ENCODE measurements at regions of chr10 and their contacts with region 1.

Region 1: GRCh38 chr10:92880233-92880861 is 32.0 kb downstream of the EXOC6 start:
- DNase-seq: peak; percentile 60
- ATAC-seq: peak; percentile 33; the same call in 1 of the 2 replicates
- H3K4me3 ChIP-seq: no peak overlapping the region
- H3K27ac ChIP-seq: no peak overlapping the region
- H3K4me1 ChIP-seq: no peaks in the 10 kb centered on the region
- H3K27me3 ChIP-seq: no peaks in the 10 kb centered on the region
- CTCF ChIP-seq: peak; percentile 73

Region 2: DNA sequence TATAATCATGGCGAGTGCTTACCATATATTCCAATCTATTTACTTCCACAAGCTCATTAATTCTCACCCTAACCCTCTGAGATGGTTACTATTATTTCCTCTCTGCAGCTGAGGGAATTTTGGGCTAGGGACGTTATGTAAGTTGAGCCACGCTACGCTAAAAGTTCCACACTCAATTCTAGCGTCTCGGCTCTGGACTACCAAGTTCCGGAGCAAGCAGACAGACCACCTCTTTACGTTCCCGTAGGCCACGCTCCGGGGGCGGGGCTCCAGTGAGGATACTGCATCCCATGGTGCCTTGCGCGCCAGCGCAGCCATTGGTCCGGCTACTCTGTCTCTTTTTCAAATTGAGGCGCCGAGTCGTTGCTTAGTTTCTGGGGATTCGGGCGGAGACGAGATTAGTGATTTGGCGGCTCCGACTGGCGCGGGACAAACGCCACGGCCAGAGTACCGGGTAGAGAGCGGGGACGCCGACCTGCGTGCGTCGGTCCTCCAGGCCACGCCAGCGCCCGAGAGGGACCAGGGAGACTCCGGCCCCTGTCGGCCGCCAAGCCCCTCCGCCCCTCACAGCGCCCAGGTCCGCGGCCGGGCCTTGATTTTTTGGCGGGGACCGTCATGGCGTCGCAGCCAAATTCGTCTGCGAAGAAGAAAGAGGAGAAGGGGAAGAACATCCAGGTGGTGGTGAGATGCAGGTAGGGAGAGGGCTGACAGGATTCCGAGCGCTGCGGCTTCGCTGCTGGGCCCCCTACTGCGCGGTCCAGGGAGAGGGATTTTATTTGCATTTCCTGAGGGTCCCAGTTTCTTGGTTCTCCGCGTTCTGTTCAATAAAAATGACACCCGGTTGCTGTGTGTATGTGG is 287.4 kb before region 1 on chr10 and contains the start of gene KIF11:
- CTCF ChIA-PET with region 1: no interaction called
- POLR2A ChIA-PET with region 1: no interaction called
- intact Hi-C with region 1: loop called (anchors 1 kb)
- DNase-seq: peak; percentile 93
- ATAC-seq: peak; percentile 76
- H3K4me3 ChIP-seq: peak within 1 kb of the TSS; percentile 90
- H3K27ac ChIP-seq: peak within 1 kb of the TSS; percentile 95
- H3K4me1 ChIP-seq: peaks cover 25% of the 10 kb centered on the region
- H3K27me3 ChIP-seq: no peaks in the 10 kb centered on the region
- CTCF ChIP-seq: no peak
- total RNA-seq, gene KIF11: 25.5 and 26.2 TPM in 2 replicates

Region 3: GRCh38 chr10:92822060-92822634 is 58.2 kb before region 1 on chr10:
- CTCF ChIA-PET with region 1: interaction called, 3 read pairs
- POLR2A ChIA-PET with region 1: no interaction called
- intact Hi-C with region 1: loop called (anchors 1 kb)
- DNase-seq: peak; percentile 85
- ATAC-seq: peak; percentile 88
- H3K4me3 ChIP-seq: peak overlapping the region; percentile 41
- H3K27ac ChIP-seq: peak overlapping the region; percentile 92
- H3K4me1 ChIP-seq: peaks cover 17% of the 10 kb centered on the region
- H3K27me3 ChIP-seq: no peaks in the 10 kb centered on the region
- CTCF ChIP-seq: no peak

Region 4: GRCh38 chr10:92848441-92849233 is 31.7 kb before region 1 on chr10 and contains the start of gene EXOC6:
- CTCF ChIA-PET with region 1: interaction called, 6 read pairs
- POLR2A ChIA-PET with region 1: no interaction called
- intact Hi-C with region 1: loop called (anchors 1 kb)
- DNase-seq: peak; percentile 70
- ATAC-seq: peak; percentile 80
- H3K4me3 ChIP-seq: peak within 1 kb of the TSS; percentile 93
- H3K27ac ChIP-seq: peak within 1 kb of the TSS; percentile 59
- H3K4me1 ChIP-seq: peaks cover 24% of the 10 kb centered on the region
- H3K27me3 ChIP-seq: no peaks in the 10 kb centered on the region
- CTCF ChIP-seq: 0 out of 2 replicates have a peak, but pooled peaks have one; percentile 5
- total RNA-seq, gene EXOC6: 5.5 and 5.7 TPM in 2 replicates

Region 5: GRCh38 chr10:92965314-92965713 is 85.0 kb after region 1 on chr10:
- CTCF ChIA-PET with region 1: no interaction called
- POLR2A ChIA-PET with region 1: no interaction called
- intact Hi-C with region 1: loop called (anchors 2 kb)
- DNase-seq: peak; percentile 68
- ATAC-seq: 0 out of 2 replicates have a peak, but pooled peaks have one; percentile 27
- H3K4me3 ChIP-seq: peak overlapping the region; percentile 31; the same call in 1 of the 2 replicates
- H3K27ac ChIP-seq: no peak overlapping the region
- H3K4me1 ChIP-seq: peaks cover 11% of the 10 kb centered on the region
- H3K27me3 ChIP-seq: no peaks in the 10 kb centered on the region
- CTCF ChIP-seq: peak; percentile 77

Region 6: GRCh38 chr10:93006435-93007039 is 126.2 kb after region 1 on chr10:
- CTCF ChIA-PET with region 1: no interaction called
- POLR2A ChIA-PET with region 1: no interaction called
- intact Hi-C with region 1: loop called (anchors 1 kb)
- DNase-seq: peak; percentile 68
- ATAC-seq: peak; percentile 77
- H3K4me3 ChIP-seq: no peak overlapping the region
- H3K27ac ChIP-seq: no peak overlapping the region
- H3K4me1 ChIP-seq: no peaks in the 10 kb centered on the region
- H3K27me3 ChIP-seq: no peaks in the 10 kb centered on the region
- CTCF ChIP-seq: peak; percentile 82

Region 7: DNA sequence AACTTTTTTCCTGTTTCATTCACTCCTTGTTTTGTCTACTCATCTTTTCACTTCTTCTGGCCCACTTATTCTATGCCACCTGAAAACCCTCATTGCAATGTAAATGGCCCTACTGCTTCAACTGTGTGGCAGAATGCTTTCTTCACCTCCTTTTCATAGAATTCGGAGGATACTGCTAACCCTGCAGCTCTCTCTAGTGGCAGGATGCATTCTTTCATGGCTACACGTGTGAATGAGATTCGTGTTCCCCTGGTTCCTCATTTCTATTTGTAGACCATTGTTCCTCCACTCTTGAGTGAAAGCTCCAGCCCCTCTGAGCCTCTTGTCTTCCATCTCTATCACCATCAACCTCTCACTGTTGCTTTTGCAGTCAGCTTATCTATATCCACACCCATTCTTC is 159.4 kb after region 1 on chr10:
- CTCF ChIA-PET with region 1: no interaction called
- POLR2A ChIA-PET with region 1: no interaction called
- intact Hi-C with region 1: loop called (anchors 1 kb)
- DNase-seq: peak; percentile 59
- ATAC-seq: peak; percentile 80
- H3K4me3 ChIP-seq: no peak overlapping the region
- H3K27ac ChIP-seq: no peak overlapping the region
- H3K4me1 ChIP-seq: no peaks in the 10 kb centered on the region
- H3K27me3 ChIP-seq: no peaks in the 10 kb centered on the region
- CTCF ChIP-seq: peak; percentile 64

Region 8: DNA sequence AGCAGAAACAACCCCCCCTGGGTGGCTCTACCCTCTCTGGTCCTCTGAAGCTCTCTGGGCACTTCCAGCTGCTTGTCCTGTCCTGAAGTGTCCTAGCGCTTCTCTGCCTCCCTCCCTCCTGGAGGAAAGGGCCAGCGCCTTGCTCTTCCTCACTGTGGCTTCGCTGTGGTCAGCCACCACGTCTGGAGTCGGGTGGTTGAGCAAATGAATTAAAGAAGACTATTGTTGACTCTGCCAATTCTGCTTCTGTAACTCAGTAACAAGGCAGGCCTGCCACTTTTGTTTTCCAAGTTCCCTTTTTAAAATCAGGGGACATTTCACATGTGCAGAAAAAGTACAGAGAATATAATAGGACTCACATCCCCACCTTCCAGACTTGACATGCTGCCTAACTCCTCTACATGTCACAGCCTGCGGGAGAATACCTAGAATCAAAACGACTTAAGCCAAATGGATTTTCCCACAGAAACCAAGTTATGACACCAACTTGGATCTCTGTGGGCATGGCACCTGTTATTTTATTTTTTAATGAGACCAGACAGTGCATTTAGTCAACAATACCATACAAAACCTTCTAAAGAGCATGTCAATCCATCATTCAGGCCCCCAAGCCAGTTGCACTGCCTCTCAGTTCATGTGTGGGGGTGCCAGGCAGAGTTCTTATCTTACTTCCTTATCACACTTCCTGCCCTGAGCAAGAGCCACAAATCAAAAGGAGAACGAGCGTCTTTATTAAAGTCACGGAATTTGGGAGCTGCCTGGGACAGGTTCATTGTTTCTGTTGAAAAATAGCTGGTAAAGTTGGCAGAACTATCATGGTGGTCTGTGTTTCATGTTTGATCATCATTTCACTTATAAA is 692.9 kb after region 1 on chr10:
- CTCF ChIA-PET with region 1: no interaction called
- POLR2A ChIA-PET with region 1: no interaction called
- intact Hi-C with region 1: no loop called
- DNase-seq: no peak
- ATAC-seq: no peak
- H3K4me3 ChIP-seq: no peak overlapping the region
- H3K27ac ChIP-seq: no peak overlapping the region
- H3K4me1 ChIP-seq: peaks cover 23% of the 10 kb centered on the region
- H3K27me3 ChIP-seq: no peaks in the 10 kb centered on the region
- CTCF ChIP-seq: no peak

Measured in PC-3 (cell line).